Naive thymus-derived CD4-positive, alpha-beta T cell (primary cell): ENCODE measurements at regions of chr4 and their contacts with region 1.

Region 1: DNA sequence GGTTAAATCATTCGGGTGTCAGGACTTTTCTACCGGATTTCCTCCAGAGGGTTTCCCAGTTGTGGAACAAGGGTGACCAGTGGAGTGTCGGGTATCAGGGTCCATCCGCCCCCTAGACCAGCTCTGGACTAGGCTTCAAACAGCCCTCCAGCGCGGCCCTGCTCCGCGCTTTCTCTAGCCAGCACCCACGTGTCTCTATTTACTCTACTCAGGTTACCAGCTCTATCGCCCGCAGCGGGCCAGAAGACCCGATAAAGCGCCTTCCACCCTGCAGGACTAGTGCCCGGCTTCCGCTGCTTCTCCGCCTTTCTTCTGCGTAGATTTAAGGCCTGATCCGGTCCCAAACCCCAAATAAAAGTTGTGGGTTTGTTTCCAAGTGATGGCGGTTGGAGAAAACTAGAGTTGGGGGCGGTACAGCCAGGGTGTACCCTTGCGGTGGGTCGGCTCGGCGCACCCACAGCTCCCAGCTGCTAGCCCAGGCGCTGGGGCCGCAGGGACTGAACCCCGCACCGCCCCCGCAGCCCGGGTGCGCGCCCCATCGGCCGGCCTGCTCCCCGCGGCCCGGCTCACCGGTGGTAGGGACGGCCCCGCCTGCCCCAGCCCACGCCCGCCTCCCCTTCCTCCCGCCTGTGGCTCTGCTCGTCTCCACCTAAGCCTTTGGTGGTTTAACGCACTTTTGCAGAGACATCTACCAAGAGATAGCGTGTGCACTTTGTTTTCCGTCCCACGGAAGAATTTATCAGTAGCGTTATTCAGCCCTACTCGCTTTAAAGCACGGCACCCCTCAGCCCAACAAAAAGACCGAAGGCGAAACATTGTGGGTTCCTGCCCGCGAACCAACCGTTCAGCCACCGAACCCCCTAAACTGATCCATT is 2.1 kb downstream of the LEF1 start:
- DNase-seq: peak; percentile 38 to 89 (median 70)
- ATAC-seq: peak; percentile 41
- H3K4me3 ChIP-seq: peak overlapping the region; percentile 77
- H3K4me3 Mint-ChIP-seq: peak overlapping the region; percentile 89 to 100 (median 98)
- H3K27ac ChIP-seq: peak overlapping the region; percentile 87
- H3K27ac Mint-ChIP-seq: peak overlapping the region; percentile 90 to 98 (median 97)
- H3K4me1 ChIP-seq: peaks cover 8 to 13% of the 10 kb centered on the region in 2 donors
- H3K4me1 Mint-ChIP-seq: peaks cover 13 to 46% (median 25%) of the 10 kb centered on the region in 7 donors
- H3K27me3 ChIP-seq: no peaks in the 10 kb centered on the region
- H3K27me3 Mint-ChIP-seq: peaks cover 0 to 33% (median 0%) of the 10 kb centered on the region in 5 donors

Region 2: GRCh38 chr4:107863850-107864371 is 302.8 kb before region 1 on chr4:
- CTCF ChIA-PET with region 1: no interaction called
- POLR2A ChIA-PET with region 1: no interaction called
- intact Hi-C with region 1: no loop called
- DNase-seq: no peak
- ATAC-seq: no peak
- H3K4me3 ChIP-seq: no peak overlapping the region
- H3K4me3 Mint-ChIP-seq: no peak overlapping the region
- H3K27ac ChIP-seq: no peak overlapping the region
- H3K27ac Mint-ChIP-seq: no peak overlapping the region
- H3K4me1 ChIP-seq: no peaks in the 10 kb centered on the region
- H3K4me1 Mint-ChIP-seq: peaks cover 0 to 9% (median 0%) of the 10 kb centered on the region in 7 donors
- H3K27me3 ChIP-seq: no peaks in the 10 kb centered on the region
- H3K27me3 Mint-ChIP-seq: peaks cover 4 to 42% (median 9%) of the 10 kb centered on the region in 5 donors

Region 3: GRCh38 chr4:108045694-108046038 is 121.0 kb before region 1 on chr4:
- CTCF ChIA-PET with region 1: interaction called, 3 read pairs
- POLR2A ChIA-PET with region 1: interaction called, 7 read pairs
- intact Hi-C with region 1: loop called in 1 of 2 experiments (anchors 1 kb)
- DNase-seq: peak in 4 of 9 donors; percentile 47 to 67 (median 60)
- ATAC-seq: peak; percentile 54
- H3K4me3 ChIP-seq: no peak overlapping the region
- H3K4me3 Mint-ChIP-seq: peak overlapping the region in 6 of 10 donors; percentile 15 to 69 (median 53)
- H3K27ac ChIP-seq: peak overlapping the region; percentile 71
- H3K27ac Mint-ChIP-seq: peak overlapping the region; percentile 46 to 99 (median 89)
- H3K4me1 ChIP-seq: peaks cover 10 to 57% of the 10 kb centered on the region in 2 donors
- H3K4me1 Mint-ChIP-seq: peaks cover 31 to 80% (median 73%) of the 10 kb centered on the region in 7 donors
- H3K27me3 ChIP-seq: no peaks in the 10 kb centered on the region
- H3K27me3 Mint-ChIP-seq: no peaks in the 10 kb centered on the region

Region 4: DNA sequence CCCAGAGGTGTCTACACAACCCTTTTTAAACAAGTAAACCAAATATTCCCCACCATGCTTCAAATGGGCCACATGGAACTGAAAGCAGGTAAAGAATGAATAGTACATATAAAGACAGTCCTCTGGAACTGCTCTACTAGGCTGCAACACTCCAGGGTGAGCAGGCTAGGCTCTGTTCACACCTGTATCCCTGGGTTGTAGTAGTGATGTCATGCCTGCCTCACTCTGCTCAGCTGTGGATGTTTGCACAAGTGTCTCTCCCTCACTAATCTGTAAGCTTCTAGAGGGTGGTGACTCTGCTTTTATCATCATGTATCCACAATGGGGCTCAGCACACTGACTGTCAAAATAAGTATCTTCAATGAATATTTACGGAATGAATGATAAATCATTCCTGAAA is 18.4 kb before region 1 on chr4:
- CTCF ChIA-PET with region 1: interaction called, 6 read pairs
- POLR2A ChIA-PET with region 1: interaction called, 94 read pairs
- intact Hi-C with region 1: loop called (anchors 1 to 2 kb)
- DNase-seq: peak in 5 of 9 donors; percentile 44 to 82 (median 47)
- ATAC-seq: peak; percentile 74
- H3K4me3 ChIP-seq: peak overlapping the region; percentile 32
- H3K4me3 Mint-ChIP-seq: peak overlapping the region; percentile 41 to 86 (median 80)
- H3K27ac ChIP-seq: peak overlapping the region; percentile 81
- H3K27ac Mint-ChIP-seq: peak overlapping the region; percentile 36 to 97 (median 92)
- H3K4me1 ChIP-seq: peaks cover 25 to 91% of the 10 kb centered on the region in 2 donors
- H3K4me1 Mint-ChIP-seq: peaks cover 56 to 94% (median 93%) of the 10 kb centered on the region in 7 donors
- H3K27me3 ChIP-seq: no peaks in the 10 kb centered on the region
- H3K27me3 Mint-ChIP-seq: no peaks in the 10 kb centered on the region

Region 5: GRCh38 chr4:108483079-108483478 is 316.4 kb after region 1 on chr4:
- CTCF ChIA-PET with region 1: no interaction called
- POLR2A ChIA-PET with region 1: no interaction called
- intact Hi-C with region 1: loop called in 1 of 2 experiments (anchors 2 kb)
- DNase-seq: peak in 4 of 9 donors; percentile 10 to 31 (median 18)
- ATAC-seq: peak; percentile 31
- H3K4me3 ChIP-seq: peak overlapping the region; percentile 11
- H3K4me3 Mint-ChIP-seq: peak overlapping the region; percentile 38 to 82 (median 74)
- H3K27ac ChIP-seq: no peak overlapping the region
- H3K27ac Mint-ChIP-seq: peak overlapping the region in 8 of 9 donors; percentile 34 to 92 (median 68)
- H3K4me1 ChIP-seq: peaks cover 18 to 21% of the 10 kb centered on the region in 2 donors
- H3K4me1 Mint-ChIP-seq: peaks cover 26 to 47% (median 44%) of the 10 kb centered on the region in 7 donors
- H3K27me3 ChIP-seq: no peaks in the 10 kb centered on the region
- H3K27me3 Mint-ChIP-seq: no peaks in the 10 kb centered on the region

Region 6: GRCh38 chr4:108620101-108620932 is 453.6 kb after region 1 on chr4 and contains the start of gene RPL34:
- CTCF ChIA-PET with region 1: no interaction called
- POLR2A ChIA-PET with region 1: interaction called, 3 read pairs
- intact Hi-C with region 1: loop called in 1 of 2 experiments (anchors 1 kb)
- DNase-seq: peak; percentile 85 to 99 (median 96)
- ATAC-seq: peak; percentile 100
- H3K4me3 ChIP-seq: peak within 1 kb of the TSS; percentile 98
- H3K4me3 Mint-ChIP-seq: peak within 1 kb of the TSS; percentile 87 to 99 (median 96)
- H3K27ac ChIP-seq: peak within 1 kb of the TSS; percentile 90
- H3K27ac Mint-ChIP-seq: peak within 1 kb of the TSS; percentile 95 to 99 (median 97)
- H3K4me1 ChIP-seq: peaks cover 29 to 30% of the 10 kb centered on the region in 2 donors
- H3K4me1 Mint-ChIP-seq: peaks cover 33 to 81% (median 66%) of the 10 kb centered on the region in 7 donors
- H3K27me3 ChIP-seq: no peaks in the 10 kb centered on the region
- H3K27me3 Mint-ChIP-seq: peaks cover 0 to 3% (median 0%) of the 10 kb centered on the region in 5 donors
- total RNA-seq, gene RPL34: 1,411 to 3,442 (median 3,215) TPM